CD4-positive, alpha-beta memory T cell (primary cell): ENCODE measurements at regions of chr3 and their contacts with region 1.

Region 1: GRCh38 chr3:52444860-52445793 is at the start of gene SEMA3G:
- DNase-seq: peak; percentile 62 to 84 (median 66)
- H3K4me3 ChIP-seq: peak within 1 kb of the TSS in 1 of 2 donors; percentile 9
- H3K4me3 Mint-ChIP-seq: peak within 1 kb of the TSS in 3 of 8 donors; percentile 8 to 29 (median 12)
- H3K27ac ChIP-seq: no peak within 1 kb of the TSS
- H3K27ac Mint-ChIP-seq: peak within 1 kb of the TSS in 3 of 7 donors; percentile 10 to 76 (median 32)
- H3K4me1 ChIP-seq: peaks cover 14% of the 10 kb centered on the region
- H3K4me1 Mint-ChIP-seq: peaks cover 6 to 16% (median 12%) of the 10 kb centered on the region in 4 donors
- H3K27me3 ChIP-seq: no peaks in the 10 kb centered on the region
- H3K27me3 Mint-ChIP-seq: no peaks in the 10 kb centered on the region
- total RNA-seq, gene SEMA3G: 0.17 to 0.22 TPM

Region 2: DNA sequence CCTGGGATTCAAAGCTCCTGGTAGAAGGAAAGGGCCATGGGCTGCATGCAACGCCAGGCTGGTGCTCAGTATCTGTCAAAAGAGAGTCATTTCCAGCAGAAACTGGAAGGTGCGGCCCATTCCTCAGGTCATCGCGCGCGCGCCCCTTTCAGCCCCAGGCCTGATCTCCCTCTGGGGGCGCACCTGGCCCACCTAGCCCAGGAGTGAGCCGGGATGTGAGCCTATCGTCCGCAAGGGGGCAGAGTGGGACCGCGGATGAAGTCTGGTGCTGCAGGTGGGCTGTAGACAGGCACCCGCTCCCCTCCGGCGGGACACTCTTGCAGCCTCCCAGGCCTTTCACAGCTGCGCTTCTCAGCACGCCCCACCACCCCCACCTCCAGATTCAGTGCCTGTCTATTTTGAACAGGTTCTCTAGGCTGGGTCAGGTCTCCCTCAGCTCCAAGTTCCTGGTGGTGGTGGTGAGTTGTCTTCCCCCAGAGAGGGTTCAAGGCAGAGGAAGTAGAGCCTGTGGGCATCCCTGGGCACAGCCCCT is 443.6 kb before region 1 on chr3:
- CTCF ChIA-PET with region 1: interaction called, 4 read pairs
- POLR2A ChIA-PET with region 1: no interaction called
- intact Hi-C with region 1: loop called (anchors 1 kb)
- DNase-seq: peak; percentile 81 to 86 (median 84)
- H3K4me3 ChIP-seq: no peak overlapping the region
- H3K4me3 Mint-ChIP-seq: peak overlapping the region in 5 of 8 donors; percentile 4 to 26 (median 8)
- H3K27ac ChIP-seq: no peak overlapping the region
- H3K27ac Mint-ChIP-seq: peak overlapping the region in 4 of 7 donors; percentile 46 to 80 (median 60)
- H3K4me1 ChIP-seq: peaks cover 21% of the 10 kb centered on the region
- H3K4me1 Mint-ChIP-seq: peaks cover 3 to 22% (median 12%) of the 10 kb centered on the region in 4 donors
- H3K27me3 ChIP-seq: no peaks in the 10 kb centered on the region
- H3K27me3 Mint-ChIP-seq: no peaks in the 10 kb centered on the region

Region 3: GRCh38 chr3:52231502-52232293 is 213.4 kb before region 1 on chr3:
- CTCF ChIA-PET with region 1: interaction called, 16 read pairs
- POLR2A ChIA-PET with region 1: no interaction called
- intact Hi-C with region 1: loop called (anchors 2 kb)
- DNase-seq: peak; percentile 82 to 88 (median 85)
- H3K4me3 ChIP-seq: no peak overlapping the region
- H3K4me3 Mint-ChIP-seq: peak overlapping the region in 7 of 8 donors; percentile 35 to 82 (median 66)
- H3K27ac ChIP-seq: no peak overlapping the region
- H3K27ac Mint-ChIP-seq: peak overlapping the region; percentile 29 to 89 (median 81)
- H3K4me1 ChIP-seq: peaks cover 57% of the 10 kb centered on the region
- H3K4me1 Mint-ChIP-seq: peaks cover 23 to 77% (median 43%) of the 10 kb centered on the region in 4 donors
- H3K27me3 ChIP-seq: no peaks in the 10 kb centered on the region
- H3K27me3 Mint-ChIP-seq: no peaks in the 10 kb centered on the region

Region 4: DNA sequence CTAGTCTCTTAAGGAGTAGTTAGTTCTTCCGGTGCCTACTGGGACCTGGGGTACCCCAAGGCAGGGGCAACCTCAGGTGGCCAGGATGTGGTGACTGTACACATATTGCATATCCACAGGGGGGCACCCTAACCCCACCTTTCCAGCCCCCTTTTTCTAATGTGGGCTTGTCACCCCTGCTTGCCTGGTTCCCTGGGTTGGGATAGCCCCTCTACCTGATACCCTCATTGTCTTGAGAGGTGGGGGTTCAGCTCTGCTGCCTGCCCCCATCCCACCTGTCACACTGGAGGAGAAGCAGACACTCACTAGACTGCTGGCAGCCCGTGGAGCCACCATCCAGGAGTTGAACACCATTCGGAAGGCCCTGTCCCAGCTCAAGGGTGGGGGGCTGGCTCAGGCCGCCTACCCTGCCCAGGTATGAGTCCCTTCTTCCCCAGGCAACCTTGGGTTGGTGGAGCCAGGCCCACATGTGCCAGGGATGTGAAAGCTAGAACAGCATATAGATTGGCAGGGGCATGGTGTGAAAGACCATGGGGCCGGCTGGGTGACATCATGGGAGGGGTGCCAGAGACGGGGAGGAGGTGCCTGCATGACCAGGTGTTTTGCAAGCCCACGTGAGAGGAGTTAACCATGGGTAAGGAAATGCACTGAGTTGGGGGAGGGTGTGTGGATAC is 153.5 kb before region 1 on chr3:
- CTCF ChIA-PET with region 1: interaction called, 3 read pairs
- POLR2A ChIA-PET with region 1: interaction called, 5 read pairs
- intact Hi-C with region 1: loop called (anchors 1 kb)
- DNase-seq: no peak
- H3K4me3 ChIP-seq: no peak overlapping the region
- H3K4me3 Mint-ChIP-seq: peak overlapping the region in 4 of 8 donors; percentile 29 to 78 (median 40)
- H3K27ac ChIP-seq: no peak overlapping the region
- H3K27ac Mint-ChIP-seq: peak overlapping the region in 4 of 7 donors; percentile 35 to 83 (median 64)
- H3K4me1 ChIP-seq: peaks cover 31% of the 10 kb centered on the region
- H3K4me1 Mint-ChIP-seq: peaks cover 18 to 40% (median 27%) of the 10 kb centered on the region in 4 donors
- H3K27me3 ChIP-seq: no peaks in the 10 kb centered on the region
- H3K27me3 Mint-ChIP-seq: no peaks in the 10 kb centered on the region

Region 5: DNA sequence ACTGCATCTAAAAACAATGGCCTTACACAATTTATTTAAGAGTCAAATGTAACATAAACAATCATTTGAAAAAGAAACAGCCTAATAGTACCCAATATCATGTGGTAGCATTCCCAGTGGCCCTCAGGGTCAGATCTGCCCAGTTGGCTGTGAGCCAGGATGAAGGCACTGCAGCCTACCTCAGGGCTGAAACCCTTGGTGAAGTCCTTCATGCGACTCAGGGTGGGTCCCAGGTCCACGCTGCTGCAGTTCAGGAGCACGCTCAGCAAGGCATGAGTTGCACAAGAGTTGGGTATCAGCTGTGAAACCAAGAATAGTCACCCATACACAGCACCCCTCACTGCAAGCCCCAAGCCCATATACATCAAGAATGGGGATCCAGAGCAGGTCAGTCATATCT is 37.3 kb before region 1 on chr3:
- CTCF ChIA-PET with region 1: interaction called, 107 read pairs
- POLR2A ChIA-PET with region 1: no interaction called
- intact Hi-C with region 1: loop called (anchors 1 kb)
- DNase-seq: peak in 1 of 5 donors; percentile 37
- H3K4me3 ChIP-seq: no peak overlapping the region
- H3K4me3 Mint-ChIP-seq: peak overlapping the region in 5 of 8 donors; percentile 23 to 96 (median 85)
- H3K27ac ChIP-seq: no peak overlapping the region
- H3K27ac Mint-ChIP-seq: peak overlapping the region in 5 of 7 donors; percentile 6 to 96 (median 93)
- H3K4me1 ChIP-seq: peaks cover 37% of the 10 kb centered on the region
- H3K4me1 Mint-ChIP-seq: peaks cover 27 to 44% (median 35%) of the 10 kb centered on the region in 4 donors
- H3K27me3 ChIP-seq: no peaks in the 10 kb centered on the region
- H3K27me3 Mint-ChIP-seq: no peaks in the 10 kb centered on the region

Region 6: GRCh38 chr3:52428151-52429005 is 16.7 kb before region 1 on chr3:
- CTCF ChIA-PET with region 1: interaction called, 82 read pairs
- POLR2A ChIA-PET with region 1: interaction called, 3 read pairs
- intact Hi-C with region 1: loop called (anchors 1 kb)
- DNase-seq: peak; percentile 25 to 39 (median 36)
- H3K4me3 ChIP-seq: no peak overlapping the region
- H3K4me3 Mint-ChIP-seq: no peak overlapping the region
- H3K27ac ChIP-seq: no peak overlapping the region
- H3K27ac Mint-ChIP-seq: peak overlapping the region in 1 of 7 donors; percentile 54
- H3K4me1 ChIP-seq: peaks cover 13% of the 10 kb centered on the region
- H3K4me1 Mint-ChIP-seq: peaks cover 4 to 14% (median 5%) of the 10 kb centered on the region in 4 donors
- H3K27me3 ChIP-seq: no peaks in the 10 kb centered on the region
- H3K27me3 Mint-ChIP-seq: no peaks in the 10 kb centered on the region

Region 7: GRCh38 chr3:52455283-52456168 is 10.4 kb after region 1 on chr3 and contains the start of gene NISCH:
- CTCF ChIA-PET with region 1: interaction called, 11 read pairs
- POLR2A ChIA-PET with region 1: interaction called, 13 read pairs
- intact Hi-C with region 1: no loop called
- DNase-seq: peak; percentile 93 to 98 (median 96)
- H3K4me3 ChIP-seq: peak within 1 kb of the TSS; percentile 91 to 97
- H3K4me3 Mint-ChIP-seq: peak within 1 kb of the TSS; percentile 91 to 97 (median 94)
- H3K27ac ChIP-seq: peak within 1 kb of the TSS; percentile 93
- H3K27ac Mint-ChIP-seq: peak within 1 kb of the TSS; percentile 97 to 99 (median 99)
- H3K4me1 ChIP-seq: peaks cover 36% of the 10 kb centered on the region
- H3K4me1 Mint-ChIP-seq: peaks cover 25 to 60% (median 35%) of the 10 kb centered on the region in 4 donors
- H3K27me3 ChIP-seq: no peaks in the 10 kb centered on the region
- H3K27me3 Mint-ChIP-seq: no peaks in the 10 kb centered on the region
- total RNA-seq, gene NISCH: 189 to 205 TPM

Region 8: DNA sequence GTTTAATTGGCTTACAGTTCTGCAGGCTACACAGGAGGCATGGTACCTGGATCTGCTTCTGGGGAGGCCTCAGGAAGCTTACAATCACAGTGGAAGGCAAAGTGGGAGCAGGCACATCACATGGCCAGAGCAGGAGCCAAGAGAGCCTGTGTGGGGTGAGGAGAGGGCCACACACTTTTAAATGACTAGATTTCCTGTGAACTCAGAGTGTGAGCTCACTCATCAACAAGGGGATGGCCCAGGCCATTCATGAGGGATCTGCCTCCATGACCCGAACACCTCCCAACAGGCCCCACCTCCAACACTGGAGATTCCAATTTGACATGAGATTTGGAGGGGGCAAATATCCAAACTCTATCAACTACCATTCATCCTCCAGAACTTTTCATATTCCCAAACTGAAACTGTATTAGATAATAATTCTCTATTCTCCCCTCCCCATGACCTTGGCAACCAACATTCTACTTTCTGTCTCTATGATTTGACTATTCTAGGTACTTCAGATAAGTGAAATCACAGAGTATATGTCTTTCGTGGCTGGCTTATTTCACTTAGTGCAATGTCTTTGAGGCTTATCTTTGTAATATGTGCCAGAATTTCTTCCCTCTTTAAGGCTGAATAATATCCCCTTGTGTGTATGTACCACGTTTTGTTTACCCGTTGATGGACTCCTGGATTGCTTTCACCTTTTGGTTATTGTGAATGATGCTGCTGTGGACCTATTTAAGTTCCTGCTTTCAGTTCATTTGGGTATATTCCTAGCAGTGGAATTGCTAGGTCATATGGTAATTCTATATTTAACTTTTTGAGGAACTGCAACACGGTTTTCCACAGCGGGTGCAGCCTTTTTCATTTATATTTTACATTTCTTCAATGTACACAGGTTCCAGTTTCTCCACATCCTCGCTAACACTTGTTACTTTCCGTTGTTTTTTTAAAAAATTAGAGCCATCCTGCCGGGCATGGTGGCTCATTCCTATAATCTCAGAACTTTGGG is 766.9 kb after region 1 on chr3:
- CTCF ChIA-PET with region 1: no interaction called
- POLR2A ChIA-PET with region 1: no interaction called
- intact Hi-C with region 1: no loop called
- DNase-seq: no peak
- H3K4me3 ChIP-seq: no peak overlapping the region
- H3K4me3 Mint-ChIP-seq: no peak overlapping the region
- H3K27ac ChIP-seq: no peak overlapping the region
- H3K27ac Mint-ChIP-seq: peak overlapping the region in 1 of 7 donors; percentile 39
- H3K4me1 ChIP-seq: no peaks in the 10 kb centered on the region
- H3K4me1 Mint-ChIP-seq: no peaks in the 10 kb centered on the region
- H3K27me3 ChIP-seq: no peaks in the 10 kb centered on the region
- H3K27me3 Mint-ChIP-seq: peaks cover 0 to 3% of the 10 kb centered on the region in 2 donors